CD4-positive, alpha-beta memory T cell (primary cell): ENCODE measurements at regions of chr7 and their contacts with region 1.

Region 1: GRCh38 chr7:121366852-121367431 is 29.2 kb downstream of the FAM3C start:
- DNase-seq: peak in 4 of 5 donors; percentile 48 to 56 (median 56)
- H3K4me3 ChIP-seq: no peak overlapping the region
- H3K4me3 Mint-ChIP-seq: no peak overlapping the region
- H3K27ac ChIP-seq: no peak overlapping the region
- H3K27ac Mint-ChIP-seq: peak overlapping the region in 1 of 7 donors; percentile 59
- H3K4me1 ChIP-seq: peaks cover 6% of the 10 kb centered on the region
- H3K4me1 Mint-ChIP-seq: peaks cover 5 to 11% (median 7%) of the 10 kb centered on the region in 4 donors
- H3K27me3 ChIP-seq: no peaks in the 10 kb centered on the region
- H3K27me3 Mint-ChIP-seq: no peaks in the 10 kb centered on the region

Region 2: DNA sequence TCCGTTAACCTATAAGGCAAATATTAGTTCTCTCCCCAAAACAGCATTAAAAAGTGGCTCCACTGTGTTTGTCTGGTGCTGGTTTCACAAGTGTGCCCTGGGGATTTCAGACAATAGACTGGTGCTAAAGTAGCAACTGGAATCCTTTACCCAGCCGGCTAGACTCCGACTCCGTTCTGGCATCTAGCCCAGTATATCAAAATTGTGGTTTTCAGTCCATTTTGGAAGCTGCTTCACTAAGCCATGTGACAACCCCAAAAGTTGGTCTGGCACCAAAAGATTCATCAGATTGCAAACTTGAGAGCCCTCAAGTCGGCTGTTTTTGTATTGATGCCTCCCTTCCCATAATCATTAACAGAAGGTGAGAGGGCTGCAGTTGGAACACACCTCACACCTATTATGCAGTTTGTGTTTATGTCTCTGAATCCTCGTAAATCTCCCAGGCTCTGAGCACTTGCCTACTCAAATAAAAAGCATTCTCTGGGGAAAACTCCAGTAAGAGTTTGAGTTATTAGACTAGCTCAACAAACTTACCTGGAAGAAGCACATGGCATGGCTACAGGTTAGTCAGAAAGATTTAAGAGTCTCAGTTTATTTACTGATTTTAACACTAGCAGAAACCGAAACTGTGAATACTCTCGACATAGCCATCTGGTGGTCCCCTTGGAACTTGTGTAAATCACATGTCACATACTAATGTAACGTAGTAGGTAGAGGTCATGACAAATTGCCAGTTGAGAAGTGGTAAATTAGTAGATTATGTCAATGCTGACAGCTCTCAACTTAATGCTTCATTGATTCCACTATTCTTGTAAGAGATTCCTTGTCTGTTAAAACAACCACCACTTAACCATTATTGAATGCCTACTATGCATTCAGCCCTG is 52.9 kb before region 1 on chr7:
- CTCF ChIA-PET with region 1: no interaction called
- POLR2A ChIA-PET with region 1: no interaction called
- intact Hi-C with region 1: no loop called
- DNase-seq: no peak
- H3K4me3 ChIP-seq: no peak overlapping the region
- H3K4me3 Mint-ChIP-seq: no peak overlapping the region
- H3K27ac ChIP-seq: no peak overlapping the region
- H3K27ac Mint-ChIP-seq: no peak overlapping the region
- H3K4me1 ChIP-seq: no peaks in the 10 kb centered on the region
- H3K4me1 Mint-ChIP-seq: no peaks in the 10 kb centered on the region
- H3K27me3 ChIP-seq: no peaks in the 10 kb centered on the region
- H3K27me3 Mint-ChIP-seq: peaks cover 1 to 13% of the 10 kb centered on the region in 2 donors

Region 3: DNA sequence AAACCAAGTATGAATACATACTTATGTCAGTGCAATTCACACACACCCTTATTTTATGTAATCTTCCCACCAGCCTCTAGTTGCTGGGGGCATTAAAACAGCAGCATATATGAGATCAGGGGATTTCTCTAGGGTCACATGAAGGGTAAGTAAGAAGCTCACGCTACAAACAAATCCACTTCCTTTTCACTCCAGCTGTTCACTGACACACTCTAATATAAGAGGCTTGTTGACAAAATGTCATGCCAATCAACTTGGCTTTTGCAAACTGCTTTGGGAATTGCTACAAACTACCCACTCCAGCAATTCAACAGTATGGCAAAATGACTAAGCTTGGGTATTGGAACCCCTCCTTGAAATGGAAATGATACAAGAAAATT is 18.8 kb after region 1 on chr7:
- CTCF ChIA-PET with region 1: interaction called, 30 read pairs
- POLR2A ChIA-PET with region 1: no interaction called
- intact Hi-C with region 1: no loop called
- DNase-seq: peak; percentile 7 to 47 (median 18)
- H3K4me3 ChIP-seq: no peak overlapping the region
- H3K4me3 Mint-ChIP-seq: peak overlapping the region in 2 of 8 donors; percentile 21 to 43
- H3K27ac ChIP-seq: no peak overlapping the region
- H3K27ac Mint-ChIP-seq: peak overlapping the region in 3 of 7 donors; percentile 4 to 53 (median 33)
- H3K4me1 ChIP-seq: peaks cover 50% of the 10 kb centered on the region
- H3K4me1 Mint-ChIP-seq: peaks cover 50 to 67% (median 64%) of the 10 kb centered on the region in 4 donors
- H3K27me3 ChIP-seq: no peaks in the 10 kb centered on the region
- H3K27me3 Mint-ChIP-seq: no peaks in the 10 kb centered on the region

Region 4: GRCh38 chr7:121442845-121443244 is 75.9 kb after region 1 on chr7:
- CTCF ChIA-PET with region 1: interaction called, 35 read pairs
- POLR2A ChIA-PET with region 1: interaction called, 3 read pairs
- intact Hi-C with region 1: loop called (anchors 1 kb)
- DNase-seq: peak; percentile 29 to 73 (median 59)
- H3K4me3 ChIP-seq: no peak overlapping the region
- H3K4me3 Mint-ChIP-seq: peak overlapping the region in 3 of 8 donors; percentile 3 to 39 (median 7)
- H3K27ac ChIP-seq: peak overlapping the region; percentile 3
- H3K27ac Mint-ChIP-seq: peak overlapping the region in 6 of 7 donors; percentile 45 to 89 (median 84)
- H3K4me1 ChIP-seq: peaks cover 20% of the 10 kb centered on the region
- H3K4me1 Mint-ChIP-seq: peaks cover 24 to 45% (median 36%) of the 10 kb centered on the region in 4 donors
- H3K27me3 ChIP-seq: no peaks in the 10 kb centered on the region
- H3K27me3 Mint-ChIP-seq: no peaks in the 10 kb centered on the region

Region 5: GRCh38 chr7:121510296-121510695 is 143.4 kb after region 1 on chr7:
- CTCF ChIA-PET with region 1: interaction called, 102 read pairs
- POLR2A ChIA-PET with region 1: interaction called, 3 read pairs
- intact Hi-C with region 1: loop called (anchors 1 kb)
- DNase-seq: peak in 4 of 5 donors; percentile 21 to 34 (median 27)
- H3K4me3 ChIP-seq: no peak overlapping the region
- H3K4me3 Mint-ChIP-seq: no peak overlapping the region
- H3K27ac ChIP-seq: no peak overlapping the region
- H3K27ac Mint-ChIP-seq: no peak overlapping the region
- H3K4me1 ChIP-seq: no peaks in the 10 kb centered on the region
- H3K4me1 Mint-ChIP-seq: no peaks in the 10 kb centered on the region
- H3K27me3 ChIP-seq: no peaks in the 10 kb centered on the region
- H3K27me3 Mint-ChIP-seq: peaks cover 0 to 2% of the 10 kb centered on the region in 2 donors